Naive thymus-derived CD4-positive, alpha-beta T cell (primary cell): ENCODE measurements at regions of chr20 and their contacts with region 1.

Region 1: GRCh38 chr20:36050436-36051317 is 82.3 kb downstream of the CNBD2 start:
- DNase-seq: peak; percentile 72 to 89 (median 83)
- ATAC-seq: peak; percentile 97
- H3K4me3 ChIP-seq: peak overlapping the region; percentile 91
- H3K4me3 Mint-ChIP-seq: peak overlapping the region; percentile 86 to 98 (median 92)
- H3K27ac ChIP-seq: peak overlapping the region; percentile 91
- H3K27ac Mint-ChIP-seq: peak overlapping the region; percentile 85 to 96 (median 92)
- H3K4me1 ChIP-seq: peaks cover 6 to 12% of the 10 kb centered on the region in 2 donors
- H3K4me1 Mint-ChIP-seq: peaks cover 35 to 55% (median 49%) of the 10 kb centered on the region in 7 donors
- H3K27me3 ChIP-seq: no peaks in the 10 kb centered on the region
- H3K27me3 Mint-ChIP-seq: peaks cover 0 to 14% (median 3%) of the 10 kb centered on the region in 5 donors

Region 2: DNA sequence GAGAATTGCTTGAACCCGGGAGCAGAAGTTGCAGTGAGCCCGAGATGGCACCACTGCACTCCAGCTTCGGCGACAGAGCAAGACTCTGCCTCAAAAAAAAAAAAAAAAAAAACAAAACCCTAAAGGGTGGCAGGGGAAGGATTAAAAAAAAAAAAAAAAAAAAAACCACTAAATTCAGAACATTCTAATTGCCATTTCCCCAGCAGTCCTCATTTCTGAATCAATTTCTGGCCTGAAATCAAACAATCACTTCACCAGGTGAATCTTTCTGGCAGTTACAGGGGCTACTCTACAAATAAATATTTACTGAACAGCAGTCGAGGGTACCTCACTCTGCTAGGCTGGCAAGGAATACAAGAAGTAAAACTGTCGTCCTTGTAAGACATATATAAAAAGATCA is 640.1 kb before region 1 on chr20:
- CTCF ChIA-PET with region 1: no interaction called
- POLR2A ChIA-PET with region 1: no interaction called
- intact Hi-C with region 1: loop called in 1 of 2 experiments (anchors 2 kb)
- DNase-seq: no peak
- ATAC-seq: no peak
- H3K4me3 ChIP-seq: peak overlapping the region; percentile 79
- H3K4me3 Mint-ChIP-seq: peak overlapping the region; percentile 92 to 100 (median 98)
- H3K27ac ChIP-seq: no peak overlapping the region
- H3K27ac Mint-ChIP-seq: peak overlapping the region in 8 of 9 donors; percentile 48 to 100 (median 97)
- H3K4me1 ChIP-seq: peaks cover 8 to 9% of the 10 kb centered on the region in 2 donors
- H3K4me1 Mint-ChIP-seq: peaks cover 17 to 24% (median 22%) of the 10 kb centered on the region in 7 donors
- H3K27me3 ChIP-seq: no peaks in the 10 kb centered on the region
- H3K27me3 Mint-ChIP-seq: peaks cover 0 to 2% (median 0%) of the 10 kb centered on the region in 5 donors

Region 3: GRCh38 chr20:36064658-36065426 is 14.2 kb after region 1 on chr20:
- CTCF ChIA-PET with region 1: no interaction called
- POLR2A ChIA-PET with region 1: interaction called, 14 read pairs
- intact Hi-C with region 1: loop called (anchors 1 to 2 kb)
- DNase-seq: peak; percentile 83 to 97 (median 90)
- ATAC-seq: peak; percentile 99
- H3K4me3 ChIP-seq: peak overlapping the region; percentile 70
- H3K4me3 Mint-ChIP-seq: peak overlapping the region; percentile 81 to 92 (median 90)
- H3K27ac ChIP-seq: peak overlapping the region; percentile 63
- H3K27ac Mint-ChIP-seq: peak overlapping the region in 8 of 9 donors; percentile 41 to 90 (median 68)
- H3K4me1 ChIP-seq: peaks cover 0 to 3% of the 10 kb centered on the region in 2 donors
- H3K4me1 Mint-ChIP-seq: peaks cover 0 to 10% (median 1%) of the 10 kb centered on the region in 7 donors
- H3K27me3 ChIP-seq: no peaks in the 10 kb centered on the region
- H3K27me3 Mint-ChIP-seq: peaks cover 0 to 57% (median 0%) of the 10 kb centered on the region in 5 donors

Region 4: DNA sequence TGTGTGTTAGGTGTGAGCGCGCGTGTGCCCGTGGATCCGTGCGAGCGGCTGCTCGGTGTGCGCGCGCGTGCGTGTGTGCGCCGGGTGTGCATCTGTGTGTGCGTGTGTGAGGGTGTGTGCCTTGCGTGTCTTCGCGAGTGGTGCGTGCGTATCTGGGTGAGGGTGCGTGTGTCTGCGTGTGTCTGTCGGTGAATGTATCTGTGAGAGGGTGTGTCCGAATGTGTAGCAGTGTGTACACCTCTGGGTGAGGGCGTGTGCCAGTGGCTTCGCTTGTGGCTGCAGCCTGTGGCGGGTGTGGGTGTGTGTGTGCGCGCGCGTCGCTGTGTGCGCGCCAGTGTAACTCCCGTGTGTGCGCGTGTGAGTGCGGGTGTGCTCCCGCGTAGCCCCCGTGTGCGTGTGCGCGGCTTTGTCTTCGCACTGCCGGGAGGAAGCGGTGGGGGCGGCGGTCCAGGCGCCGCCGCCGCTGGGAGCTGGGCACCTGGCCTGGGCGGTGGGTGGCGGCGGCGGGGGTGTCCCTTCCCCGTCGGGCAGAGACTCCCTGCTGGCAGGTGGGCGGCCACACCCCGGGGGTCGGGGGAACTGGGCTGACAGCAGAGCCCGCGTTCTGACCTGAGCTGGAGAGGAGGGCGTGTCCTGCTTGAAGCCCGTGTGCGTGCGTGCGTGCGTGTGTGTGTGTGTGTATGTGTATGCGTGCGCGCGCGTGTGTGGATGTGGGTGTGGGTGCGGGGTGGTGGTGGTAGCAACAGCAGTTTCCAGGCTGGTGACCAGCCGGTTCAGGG is 42.5 kb after region 1 on chr20:
- CTCF ChIA-PET with region 1: no interaction called
- POLR2A ChIA-PET with region 1: no interaction called
- intact Hi-C with region 1: loop called in 1 of 2 experiments (anchors 2 kb)
- DNase-seq: peak; percentile 16 to 56 (median 37)
- ATAC-seq: peak; percentile 65
- H3K4me3 ChIP-seq: peak overlapping the region; percentile 68
- H3K4me3 Mint-ChIP-seq: peak overlapping the region; percentile 90 to 100 (median 94)
- H3K27ac ChIP-seq: no peak overlapping the region
- H3K27ac Mint-ChIP-seq: peak overlapping the region; percentile 14 to 82 (median 56)
- H3K4me1 ChIP-seq: peaks cover 3 to 11% of the 10 kb centered on the region in 2 donors
- H3K4me1 Mint-ChIP-seq: peaks cover 10 to 20% (median 13%) of the 10 kb centered on the region in 7 donors
- H3K27me3 ChIP-seq: peaks cover 4 to 16% of the 10 kb centered on the region in 2 donors
- H3K27me3 Mint-ChIP-seq: peaks cover 34 to 54% (median 35%) of the 10 kb centered on the region in 5 donors

Region 5: DNA sequence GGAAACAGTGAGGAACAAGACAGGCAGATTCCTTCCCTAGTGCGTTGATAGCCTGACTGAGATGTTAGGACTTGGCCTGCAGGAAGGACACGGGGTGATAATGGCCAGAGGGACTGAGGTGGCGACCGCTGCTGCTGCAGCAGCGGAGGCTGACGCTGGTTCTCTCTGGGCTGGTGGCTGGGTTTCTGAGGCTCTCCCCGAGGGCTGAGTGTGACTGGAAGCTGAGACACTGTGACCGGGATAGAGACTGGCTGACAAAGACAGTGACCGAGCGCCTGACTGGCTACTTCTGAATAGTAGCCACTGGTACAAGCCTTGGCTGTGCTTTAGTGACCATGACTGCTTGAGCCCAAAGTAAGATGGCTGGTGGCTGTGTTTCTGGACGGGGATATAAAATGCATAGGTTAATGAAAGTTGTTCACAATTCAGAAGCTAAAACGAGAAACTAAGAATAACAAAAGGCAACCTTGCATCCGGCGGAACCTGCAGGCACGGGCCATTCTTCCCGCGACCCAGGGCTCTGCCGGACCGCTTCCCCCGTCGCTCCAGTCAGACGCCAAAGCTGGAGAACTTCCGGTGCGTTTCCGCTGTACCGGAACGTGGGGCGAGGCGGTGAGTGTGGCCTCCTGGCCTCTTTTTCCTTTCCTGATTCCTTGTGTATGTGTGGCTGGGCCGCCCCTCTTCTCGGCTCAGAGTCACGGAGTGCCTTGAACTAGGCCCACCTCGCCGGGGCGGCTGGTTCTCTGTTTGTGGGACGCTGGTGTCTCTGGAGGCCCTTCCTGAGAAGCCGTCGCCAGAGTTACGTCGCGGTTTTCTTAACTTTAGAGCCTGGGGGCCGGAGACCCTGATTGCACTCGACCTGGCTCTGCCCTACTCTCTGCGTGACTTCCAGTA is 185.5 kb after region 1 on chr20 and contains the start of gene AAR2:
- CTCF ChIA-PET with region 1: no interaction called
- POLR2A ChIA-PET with region 1: no interaction called
- intact Hi-C with region 1: loop called in 1 of 2 experiments (anchors 2 kb)
- DNase-seq: peak; percentile 63 to 80 (median 77)
- ATAC-seq: peak; percentile 96
- H3K4me3 ChIP-seq: peak within 1 kb of the TSS; percentile 77
- H3K4me3 Mint-ChIP-seq: peak within 1 kb of the TSS; percentile 86 to 98 (median 94)
- H3K27ac ChIP-seq: peak within 1 kb of the TSS; percentile 80
- H3K27ac Mint-ChIP-seq: peak within 1 kb of the TSS; percentile 91 to 98 (median 94)
- H3K4me1 ChIP-seq: peaks cover 4 to 22% of the 10 kb centered on the region in 2 donors
- H3K4me1 Mint-ChIP-seq: peaks cover 26 to 55% (median 37%) of the 10 kb centered on the region in 7 donors
- H3K27me3 ChIP-seq: no peaks in the 10 kb centered on the region
- H3K27me3 Mint-ChIP-seq: peaks cover 0 to 6% (median 0%) of the 10 kb centered on the region in 5 donors
- total RNA-seq, gene AAR2: 18.2 to 25.9 (median 23.7) TPM

Region 6: DNA sequence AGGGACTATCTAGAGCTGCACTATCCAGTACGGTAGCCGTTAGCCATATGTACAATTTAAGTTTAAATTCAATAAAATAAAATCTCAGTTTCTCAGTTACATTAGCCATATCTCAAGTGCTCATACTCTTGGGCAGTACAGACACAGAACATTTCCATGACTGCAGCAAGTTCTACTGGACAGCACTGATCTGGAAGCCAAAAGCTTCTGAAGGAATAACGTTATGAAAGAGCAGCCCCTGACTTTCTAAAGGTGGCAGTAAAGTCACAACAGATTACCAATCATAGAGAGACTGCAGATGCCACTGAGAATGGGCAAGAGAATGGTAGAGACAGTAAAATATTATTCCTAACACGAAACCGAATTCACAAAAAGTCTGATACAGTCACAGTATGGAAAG is 658.4 kb after region 1 on chr20:
- CTCF ChIA-PET with region 1: no interaction called
- POLR2A ChIA-PET with region 1: no interaction called
- intact Hi-C with region 1: no loop called
- DNase-seq: no peak
- ATAC-seq: no peak
- H3K4me3 ChIP-seq: no peak overlapping the region
- H3K4me3 Mint-ChIP-seq: no peak overlapping the region
- H3K27ac ChIP-seq: no peak overlapping the region
- H3K27ac Mint-ChIP-seq: peak overlapping the region in 1 of 9 donors; percentile 66
- H3K4me1 ChIP-seq: no peaks in the 10 kb centered on the region
- H3K4me1 Mint-ChIP-seq: peaks cover 0 to 5% (median 0%) of the 10 kb centered on the region in 7 donors
- H3K27me3 ChIP-seq: no peaks in the 10 kb centered on the region
- H3K27me3 Mint-ChIP-seq: no peaks in the 10 kb centered on the region